ENCODE measurements at regions of chr9 and their contacts with region 1.

Region 1: DNA sequence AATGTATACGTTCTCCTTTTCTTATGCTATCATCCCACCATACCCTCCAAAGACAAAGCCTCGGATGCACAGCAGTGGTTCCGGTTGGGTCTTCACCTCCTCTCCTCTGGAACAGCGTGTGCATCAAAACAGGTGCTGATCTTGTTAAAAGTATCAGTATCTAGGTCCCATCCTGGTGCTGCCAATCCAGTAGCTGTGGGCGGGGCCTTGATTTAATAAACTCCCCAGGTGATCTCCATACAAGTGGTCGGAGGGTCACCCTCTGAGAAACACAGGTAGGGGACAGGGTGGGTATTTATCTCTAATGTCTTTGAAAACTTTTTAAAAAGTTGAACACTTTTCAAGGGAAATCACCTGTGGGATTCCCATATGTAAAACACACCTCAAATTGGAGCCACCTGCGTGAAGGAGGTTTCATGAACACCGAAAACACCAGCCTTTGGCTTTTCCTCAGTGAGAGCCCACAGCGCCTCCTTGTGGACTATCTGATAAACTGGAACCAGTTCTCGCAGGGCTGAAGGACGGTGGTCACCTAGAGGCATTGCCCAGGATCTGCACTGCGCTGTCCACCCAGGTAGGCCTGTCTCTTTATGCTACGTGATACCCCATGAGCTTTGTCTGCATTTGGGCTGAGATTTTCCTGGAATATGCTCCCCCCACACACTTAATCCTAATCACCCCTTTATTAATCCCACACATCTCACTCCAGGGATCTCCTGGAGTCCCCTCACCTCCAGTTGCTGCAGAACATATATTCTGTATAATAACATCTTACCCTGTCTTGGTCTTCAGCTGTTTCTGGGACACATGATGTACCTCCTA is 80.5 kb upstream of the EPB41L4B start:
- DNase-seq: peak; percentile 59
- ATAC-seq: peak; percentile 53
- H3K4me3 ChIP-seq: no peak overlapping the region
- H3K4me3 Mint-ChIP-seq: peak overlapping the region; percentile 35
- H3K27ac ChIP-seq: no peak overlapping the region
- H3K27ac Mint-ChIP-seq: no peak overlapping the region
- H3K4me1 ChIP-seq: peaks cover 0 to 21% of the 10 kb centered on the region in 2 donors
- H3K4me1 Mint-ChIP-seq: peaks cover 32% of the 10 kb centered on the region
- H3K27me3 ChIP-seq: peaks cover 0 to 9% (median 0%) of the 10 kb centered on the region in 4 experiments
- H3K27me3 Mint-ChIP-seq: peaks cover 15% of the 10 kb centered on the region
- CTCF ChIP-seq: peak; percentile 62

Region 2: GRCh38 chr9:109224751-109225150 is 176.6 kb before region 1 on chr9:
- CTCF ChIA-PET with region 1: no interaction called
- POLR2A ChIA-PET with region 1: no interaction called
- intact Hi-C with region 1: no loop called
- DNase-seq: no peak
- ATAC-seq: no peak
- H3K4me3 ChIP-seq: no peak overlapping the region
- H3K4me3 Mint-ChIP-seq: no peak overlapping the region
- H3K27ac ChIP-seq: no peak overlapping the region
- H3K27ac Mint-ChIP-seq: no peak overlapping the region
- H3K4me1 ChIP-seq: no peaks in the 10 kb centered on the region
- H3K4me1 Mint-ChIP-seq: no peaks in the 10 kb centered on the region
- H3K27me3 ChIP-seq: peaks cover 0 to 2% (median 0%) of the 10 kb centered on the region in 4 experiments
- H3K27me3 Mint-ChIP-seq: peaks cover 13% of the 10 kb centered on the region
- CTCF ChIP-seq: no peak

Region 3: GRCh38 chr9:109311731-109312130 is 89.6 kb before region 1 on chr9:
- CTCF ChIA-PET with region 1: no interaction called
- POLR2A ChIA-PET with region 1: no interaction called
- intact Hi-C with region 1: loop called (anchors 5 kb)
- DNase-seq: peak; percentile 21
- ATAC-seq: peak; percentile 82
- H3K4me3 ChIP-seq: no peak overlapping the region
- H3K4me3 Mint-ChIP-seq: no peak overlapping the region
- H3K27ac ChIP-seq: no peak overlapping the region
- H3K27ac Mint-ChIP-seq: no peak overlapping the region
- H3K4me1 ChIP-seq: no peaks in the 10 kb centered on the region
- H3K4me1 Mint-ChIP-seq: peaks cover 5% of the 10 kb centered on the region
- H3K27me3 ChIP-seq: peaks cover 0 to 18% (median 5%) of the 10 kb centered on the region in 4 experiments
- H3K27me3 Mint-ChIP-seq: peaks cover 59% of the 10 kb centered on the region
- CTCF ChIP-seq: no peak

Region 4: GRCh38 chr9:109430231-109430630 is 28.9 kb after region 1 on chr9:
- CTCF ChIA-PET with region 1: no interaction called
- POLR2A ChIA-PET with region 1: no interaction called
- intact Hi-C with region 1: no loop called
- DNase-seq: no peak
- ATAC-seq: no peak
- H3K4me3 ChIP-seq: no peak overlapping the region
- H3K4me3 Mint-ChIP-seq: no peak overlapping the region
- H3K27ac ChIP-seq: no peak overlapping the region
- H3K27ac Mint-ChIP-seq: no peak overlapping the region
- H3K4me1 ChIP-seq: no peaks in the 10 kb centered on the region
- H3K4me1 Mint-ChIP-seq: no peaks in the 10 kb centered on the region
- H3K27me3 ChIP-seq: peaks cover 0 to 2% (median 0%) of the 10 kb centered on the region in 4 experiments
- H3K27me3 Mint-ChIP-seq: peaks cover 10% of the 10 kb centered on the region
- CTCF ChIP-seq: no peak

Region 5: GRCh38 chr9:109440797-109441287 is 39.5 kb after region 1 on chr9:
- CTCF ChIA-PET with region 1: no interaction called
- POLR2A ChIA-PET with region 1: no interaction called
- intact Hi-C with region 1: loop called (anchors 1 kb)
- DNase-seq: peak; percentile 60
- ATAC-seq: peak; percentile 79
- H3K4me3 ChIP-seq: no peak overlapping the region
- H3K4me3 Mint-ChIP-seq: peak overlapping the region; percentile 32
- H3K27ac ChIP-seq: no peak overlapping the region
- H3K27ac Mint-ChIP-seq: peak overlapping the region; percentile 38
- H3K4me1 ChIP-seq: peaks cover 14 to 18% of the 10 kb centered on the region in 2 donors
- H3K4me1 Mint-ChIP-seq: peaks cover 18% of the 10 kb centered on the region
- H3K27me3 ChIP-seq: peaks cover 0 to 25% (median 6%) of the 10 kb centered on the region in 4 experiments
- H3K27me3 Mint-ChIP-seq: peaks cover 43% of the 10 kb centered on the region
- CTCF ChIP-seq: peak; percentile 60

Region 6: GRCh38 chr9:109469646-109470358 is 68.4 kb after region 1 on chr9:
- CTCF ChIA-PET with region 1: interaction called, 7 read pairs
- POLR2A ChIA-PET with region 1: no interaction called
- intact Hi-C with region 1: loop called (anchors 5 kb)
- DNase-seq: peak; percentile 65
- ATAC-seq: peak; percentile 84
- H3K4me3 ChIP-seq: no peak overlapping the region
- H3K4me3 Mint-ChIP-seq: no peak overlapping the region
- H3K27ac ChIP-seq: no peak overlapping the region
- H3K27ac Mint-ChIP-seq: no peak overlapping the region
- H3K4me1 ChIP-seq: no peaks in the 10 kb centered on the region
- H3K4me1 Mint-ChIP-seq: no peaks in the 10 kb centered on the region
- H3K27me3 ChIP-seq: peaks cover 0 to 6% (median 4%) of the 10 kb centered on the region in 4 experiments
- H3K27me3 Mint-ChIP-seq: peaks cover 35% of the 10 kb centered on the region
- CTCF ChIP-seq: peak; percentile 93

Measured in B cell (primary cell).